SK-N-SH (cell line): ENCODE measurements at regions of chr22 and their contacts with region 1.

Region 1: DNA sequence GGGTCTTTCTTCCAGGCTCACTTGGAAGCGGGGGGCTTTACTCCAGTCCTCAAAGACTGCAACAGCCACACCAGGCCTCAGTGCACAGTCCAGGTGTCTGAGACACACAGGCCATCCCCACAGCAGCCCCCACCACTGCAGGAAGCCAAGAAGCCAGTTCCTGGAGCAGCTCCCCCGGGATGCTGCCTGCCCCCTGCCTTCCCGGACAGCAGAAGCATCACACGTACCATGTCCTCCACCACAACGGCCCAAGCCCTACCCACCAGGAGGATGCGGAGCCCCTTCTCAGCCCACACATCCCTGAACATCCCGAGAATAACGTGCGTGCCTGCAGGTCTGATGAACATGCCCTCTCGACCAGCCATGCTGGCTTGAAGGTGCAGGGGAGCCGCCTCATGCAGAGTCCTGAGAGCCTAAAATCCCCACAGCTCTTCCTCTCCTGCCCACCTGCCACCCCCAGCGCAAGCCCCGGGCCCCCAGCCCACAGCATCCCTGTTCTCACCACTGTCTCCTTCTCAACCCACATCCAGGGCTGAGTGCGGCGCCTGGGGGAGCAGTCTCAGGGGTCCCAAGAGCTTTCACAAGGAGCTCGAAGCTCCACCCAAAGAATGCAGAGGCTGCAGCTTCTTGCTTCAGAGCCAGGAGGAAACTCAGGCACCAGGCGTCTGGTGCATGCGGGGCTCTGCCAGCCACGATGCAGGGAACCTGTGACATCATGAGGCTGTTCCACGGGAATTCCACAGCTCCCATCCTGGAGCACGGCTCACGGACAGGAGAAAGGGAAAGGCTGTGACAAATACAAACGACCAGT is 209.6 kb downstream of the BRD1 start:
- DNase-seq: no peak
- H3K4me3 ChIP-seq: no peak overlapping the region
- H3K27ac ChIP-seq: no peak overlapping the region
- H3K4me1 ChIP-seq: peaks cover 0 to 4% of the 10 kb centered on the region in 2 experiments; a peak in 1 of 4 replicates
- H3K27me3 ChIP-seq: no peaks in the 10 kb centered on the region; the same call in 1 of the 2 replicates
- CTCF ChIP-seq: no peak
- EP300 ChIP-seq: no peak
- RAD21 ChIP-seq: no peak

Region 2: DNA sequence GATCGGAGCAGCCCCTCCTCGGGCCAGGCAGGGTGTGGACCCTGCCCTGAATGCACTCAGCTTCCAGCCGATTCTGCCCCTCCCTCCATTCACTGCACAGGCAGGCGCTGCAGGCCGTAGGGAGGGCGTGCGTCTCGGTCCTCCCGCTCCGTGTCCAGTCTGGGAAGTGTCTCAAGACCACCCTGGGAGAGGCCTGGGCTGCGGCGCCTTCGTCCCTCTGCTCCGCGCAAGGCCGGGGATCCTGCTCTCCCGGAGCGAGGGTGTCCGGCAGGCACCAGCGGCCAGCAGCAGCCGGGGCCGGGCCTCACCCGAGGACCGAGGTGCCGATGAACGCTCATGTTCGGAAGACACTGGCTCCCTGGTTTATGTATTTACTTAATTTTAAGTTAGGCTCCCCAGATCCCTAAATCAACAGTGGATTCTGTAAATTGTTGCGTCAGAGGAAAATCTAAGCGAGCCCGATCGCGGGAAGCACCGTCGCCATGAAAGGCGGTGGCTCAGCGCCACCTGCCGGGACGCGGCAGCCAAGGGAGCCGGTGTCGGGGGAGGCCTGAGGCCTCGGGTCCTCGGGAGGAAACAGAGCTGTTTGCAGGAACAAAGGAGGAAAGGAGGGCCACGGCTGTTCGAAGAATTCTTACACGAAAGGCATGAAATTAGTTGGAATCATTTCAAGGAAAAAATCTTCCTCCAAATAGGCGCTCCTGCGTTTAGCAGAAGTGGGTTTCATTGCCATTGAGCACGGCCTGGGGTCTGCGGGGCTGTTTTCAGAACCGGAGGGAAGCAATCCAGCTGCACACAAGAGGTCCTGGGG is 14.3 kb after region 1 on chr22:
- CTCF ChIA-PET with region 1: interaction called, 29 read pairs
- POLR2A ChIA-PET with region 1: no interaction called
- DNase-seq: peak; percentile 91
- H3K4me3 ChIP-seq: peak overlapping the region in 1 of 2 experiments; percentile 40; a peak in 2 of 4 replicates
- H3K27ac ChIP-seq: no peak overlapping the region
- H3K4me1 ChIP-seq: peaks cover 0 to 5% of the 10 kb centered on the region in 2 experiments; a peak in 1 of 4 replicates
- H3K27me3 ChIP-seq: no peaks in the 10 kb centered on the region; the same call in 1 of the 2 replicates
- CTCF ChIP-seq: peak; percentile 67
- EP300 ChIP-seq: no peak
- RAD21 ChIP-seq: peak; percentile 85